GM18951 (cell line): ENCODE measurements at regions of chr14 and their contacts with region 1.

Region 1: GRCh38 chr14:102863385-102863784 is 59.1 kb upstream of the AMN start:
- POLR2A ChIP-seq: no peak

Region 2: DNA sequence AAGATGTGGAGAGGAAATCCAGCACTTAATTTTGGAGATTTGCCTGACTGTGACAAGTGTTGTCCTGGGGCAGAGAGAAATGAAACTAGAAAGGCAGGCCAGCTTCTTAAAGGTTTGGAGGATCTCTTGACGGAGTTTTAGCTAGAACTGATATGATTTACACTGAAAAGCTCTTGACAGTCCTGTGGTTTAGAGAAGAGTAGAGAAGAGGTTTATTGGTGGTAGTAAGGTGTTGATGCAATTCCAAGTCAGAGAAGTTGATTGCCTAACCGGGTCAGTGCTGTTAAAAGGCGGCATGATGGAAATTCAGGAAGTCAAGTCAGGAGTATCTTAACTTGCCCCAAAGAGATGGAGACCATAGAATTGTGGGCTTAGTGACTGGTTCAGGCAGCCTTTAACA is 175.1 kb before region 1 on chr14:
- in situ Hi-C with region 1: loop called (anchors 5 kb)
- POLR2A ChIP-seq: no peak